H1 (cell line): ENCODE measurements at regions of chr14 and their contacts with region 1.

Region 1: GRCh38 chr14:103904493-103905107 is 23.7 kb upstream of the TDRD9 start:
- DNase-seq: no peak
- H3K4me3 ChIP-seq: no peak overlapping the region
- H3K27ac ChIP-seq: no peak overlapping the region
- H3K4me1 ChIP-seq: peaks cover 0 to 2% (median 1%) of the 10 kb centered on the region in 4 experiments; a peak in 1 of 7 replicates
- H3K27me3 ChIP-seq: no peaks in the 10 kb centered on the region
- CTCF ChIP-seq: no peak
- EP300 ChIP-seq: no peak
- POLR2A ChIP-seq: no peak
- RAD21 ChIP-seq: no peak

Region 2: DNA sequence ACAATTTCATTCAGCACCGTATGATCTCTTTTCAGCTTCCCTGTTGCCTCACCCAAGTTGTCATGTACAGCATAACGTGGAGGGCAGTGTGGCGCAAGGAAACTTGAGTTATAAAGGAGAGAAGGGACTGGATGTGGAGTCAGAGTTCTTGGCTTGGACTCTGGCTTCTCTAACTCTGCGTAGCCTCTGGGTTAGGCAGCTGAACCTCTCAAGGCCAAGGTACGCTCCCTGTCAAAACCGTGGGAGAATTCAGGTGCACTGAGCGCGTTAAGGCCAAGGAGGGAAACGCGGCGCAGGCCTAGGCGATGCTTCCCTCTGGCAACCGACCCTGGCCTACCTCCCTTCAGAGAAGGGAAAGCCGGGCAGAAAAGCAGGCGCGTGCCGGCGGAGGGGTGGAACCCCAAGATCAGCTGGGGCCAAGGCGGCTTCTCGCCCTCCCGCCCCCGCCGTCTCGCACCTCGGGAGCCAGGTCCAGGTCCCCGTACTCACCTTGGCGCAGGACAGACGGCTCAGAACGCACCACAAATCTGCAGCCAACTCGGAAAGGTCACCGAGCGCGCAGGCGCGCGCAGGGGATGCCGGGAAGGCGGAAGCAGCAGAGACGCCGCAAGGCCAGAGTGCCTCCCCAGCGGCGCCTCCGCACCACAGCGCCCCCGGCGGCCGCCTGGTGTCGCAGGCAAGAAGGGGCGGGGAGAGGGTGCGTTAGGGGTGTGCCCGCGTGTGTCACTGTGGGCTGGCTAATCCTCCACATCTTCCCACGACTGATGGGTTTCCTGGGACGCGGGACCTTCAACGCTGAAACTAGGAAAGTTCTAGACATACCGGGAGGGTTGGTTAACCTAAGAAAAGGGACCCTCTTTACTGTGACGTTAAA is 16.6 kb after region 1 on chr14:
- CTCF ChIA-PET with region 1: interaction called, 22 read pairs
- POLR2A ChIA-PET with region 1: interaction called, 7 read pairs
- DNase-seq: peak; percentile 74 to 96
- H3K4me3 ChIP-seq: peak overlapping the region; percentile 86 to 98 (median 94)
- H3K27ac ChIP-seq: peak overlapping the region; percentile 67
- H3K4me1 ChIP-seq: 0 out of 7 replicates have a peak, but pooled peaks cover 0 to 4% (median 0%) of the 10 kb centered on the region in 4 experiments
- H3K27me3 ChIP-seq: no peaks in the 10 kb centered on the region
- CTCF ChIP-seq: peak; percentile 96 to 97 (median 96)
- EP300 ChIP-seq: no peak
- POLR2A ChIP-seq: peak in 1 of 2 experiments; percentile 87; a peak in 2 of 3 replicates
- RAD21 ChIP-seq: peak; percentile 28 to 46; a peak in 3 of 4 replicates

Region 3: DNA sequence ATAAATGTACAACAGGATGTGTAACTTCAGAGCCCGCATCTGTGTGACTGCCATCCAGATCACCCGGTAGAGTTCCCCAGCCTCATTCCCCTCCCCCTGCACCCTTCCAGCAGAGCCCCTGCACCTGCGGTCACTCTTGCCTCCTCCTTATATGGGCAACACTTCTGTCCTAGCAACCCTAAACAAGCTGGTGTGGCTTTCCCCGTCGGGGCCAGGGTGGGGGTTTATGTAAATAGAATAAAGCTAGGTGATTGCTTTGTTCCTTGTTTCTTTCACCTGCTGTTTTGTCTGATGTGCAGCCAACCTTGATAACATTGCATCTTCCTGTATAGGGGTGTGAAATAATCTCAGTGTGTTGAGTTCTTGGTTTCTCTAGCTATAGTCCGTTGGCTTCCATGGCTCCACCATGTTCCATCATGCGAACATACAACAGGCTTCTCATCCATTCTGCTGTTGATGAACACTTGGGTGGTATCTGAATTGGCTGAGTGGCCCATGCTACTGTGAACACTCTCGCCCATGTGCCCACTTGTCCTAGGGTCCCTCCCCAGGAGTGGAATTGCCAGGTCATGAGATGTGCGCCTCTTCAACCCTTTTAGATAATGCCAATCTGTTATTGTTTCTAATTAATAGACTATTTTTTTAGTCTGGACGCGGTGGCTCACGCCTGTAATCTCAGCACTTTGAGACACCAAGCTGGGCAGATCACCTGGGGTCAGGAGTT is 336.0 kb after region 1 on chr14:
- CTCF ChIA-PET with region 1: no interaction called
- POLR2A ChIA-PET with region 1: no interaction called
- DNase-seq: peak in 1 of 2 experiments; percentile 43
- H3K4me3 ChIP-seq: no peak overlapping the region
- H3K27ac ChIP-seq: no peak overlapping the region
- H3K4me1 ChIP-seq: peaks cover 0 to 6% (median 4%) of the 10 kb centered on the region in 4 experiments; a peak in 5 of 7 replicates
- H3K27me3 ChIP-seq: no peaks in the 10 kb centered on the region
- CTCF ChIP-seq: no peak
- EP300 ChIP-seq: peak in 1 of 2 experiments; percentile 47; a peak in 1 of 3 replicates
- POLR2A ChIP-seq: no peak
- RAD21 ChIP-seq: no peak